G401 (cell line): ENCODE measurements at regions of chr22 and their contacts with region 1.

Region 1: DNA sequence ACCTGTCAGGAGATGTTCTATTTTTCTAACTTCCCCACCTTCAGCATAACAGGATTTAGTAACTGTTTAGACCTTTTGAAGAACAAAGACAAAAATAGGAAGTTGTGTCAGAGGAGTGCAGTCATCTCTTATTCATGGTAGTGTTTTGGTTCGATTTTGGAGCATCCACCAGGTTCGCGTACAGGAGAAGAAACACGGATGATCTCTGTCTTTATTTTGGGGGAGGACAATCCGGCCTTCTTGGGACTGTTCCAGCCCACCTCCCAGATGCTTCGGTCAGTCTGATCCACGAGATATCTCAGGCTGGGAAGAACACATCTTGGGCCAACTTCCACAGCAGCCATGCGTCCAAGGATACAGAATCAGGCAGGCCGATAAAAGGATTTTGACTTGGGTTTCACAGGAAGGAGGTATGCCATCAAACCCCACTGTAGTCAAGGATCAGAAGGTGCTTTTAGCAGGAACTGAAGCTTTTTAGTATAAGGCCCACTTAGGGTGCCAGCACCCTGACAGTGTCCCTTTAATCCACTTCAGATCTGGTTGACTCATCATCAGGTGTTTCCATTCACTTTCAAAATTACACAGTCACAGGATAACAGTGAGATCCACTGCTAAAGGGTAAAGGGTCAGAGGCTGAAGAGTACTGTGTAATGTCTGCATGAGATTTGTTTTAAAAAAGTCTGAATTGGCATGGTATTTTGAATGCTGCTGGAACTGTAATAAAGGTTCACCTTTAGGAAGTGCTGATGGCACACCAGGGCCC is 16.5 kb downstream of the PATZ1 start:
- DNase-seq: no peak

Region 2: GRCh38 chr22:31295831-31296657 is 33.6 kb before region 1 on chr22:
- in situ Hi-C with region 1: loop called (anchors 5 kb)
- DNase-seq: no peak